Heart left ventricle (tissue), 16 donors: ENCODE measurements at regions of chr17 and their contacts with region 1.

Region 1: DNA sequence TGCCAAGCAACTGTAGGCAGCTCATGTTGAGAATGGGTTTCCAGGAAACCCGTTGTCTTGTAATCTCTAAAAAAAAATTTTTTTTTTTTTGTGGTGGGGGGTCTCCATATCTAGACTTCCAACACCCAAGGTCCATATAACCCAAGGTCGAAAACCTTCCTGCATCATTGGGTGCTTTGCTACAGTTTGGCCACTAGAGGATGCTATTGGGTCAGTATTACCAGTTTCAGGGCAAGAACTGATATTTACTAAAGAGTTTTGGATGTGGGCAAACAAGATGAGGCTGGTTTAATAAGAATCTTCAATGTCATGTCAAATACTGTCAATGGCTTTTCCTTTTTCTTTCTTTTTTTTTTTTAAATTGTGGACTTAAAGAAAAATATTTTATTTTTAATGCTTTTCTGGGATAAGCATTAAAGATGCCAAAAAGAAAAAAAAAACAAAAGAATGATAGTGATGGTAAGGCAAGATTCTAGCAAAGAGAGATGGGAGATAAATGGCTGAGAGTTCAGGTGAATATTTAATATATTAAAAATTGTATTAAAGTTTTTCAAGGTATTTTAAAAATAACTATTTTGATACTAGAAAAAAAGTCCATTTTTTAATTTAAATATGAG is 62.2 kb downstream of the DHRS7C start:
- DNase-seq: no peak
- ATAC-seq: peak in 3 of 4 donors; percentile 54 to 63 (median 61)
- H3K4me3 ChIP-seq: no peak overlapping the region
- H3K27ac ChIP-seq: no peak overlapping the region
- H3K4me1 ChIP-seq: no peaks in the 10 kb centered on the region
- H3K27me3 ChIP-seq: peaks cover 0 to 34% (median 9%) of the 10 kb centered on the region in 9 donors
- CTCF ChIP-seq: peak; percentile 90 to 97 (median 94)
- POLR2A ChIP-seq: no peak

Region 2: GRCh38 chr17:9575381-9576101 is 153.6 kb before region 1 on chr17 and contains the start of gene STX8:
- intact Hi-C with region 1: loop called in 1 of 10 experiments (anchors 10 kb)
- DNase-seq: peak; percentile 92 to 96 (median 94)
- ATAC-seq: peak; percentile 89 to 96 (median 96)
- H3K4me3 ChIP-seq: peak within 1 kb of the TSS; percentile 59 to 99 (median 82)
- H3K27ac ChIP-seq: peak within 1 kb of the TSS in 11 of 12 donors; percentile 41 to 81 (median 63)
- H3K4me1 ChIP-seq: peaks cover 0 to 29% (median 16%) of the 10 kb centered on the region in 12 donors
- H3K27me3 ChIP-seq: no peaks in the 10 kb centered on the region
- CTCF ChIP-seq: no peak
- POLR2A ChIP-seq: peak in 1 of 2 donors; percentile 40
- total RNA-seq, gene STX8: 51.9 to 86.0 (median 62.3) TPM

Region 3: GRCh38 chr17:9612006-9612405 is 117.1 kb before region 1 on chr17:
- intact Hi-C with region 1: no loop called
- DNase-seq: no peak
- ATAC-seq: no peak
- H3K4me3 ChIP-seq: no peak overlapping the region
- H3K27ac ChIP-seq: no peak overlapping the region
- H3K4me1 ChIP-seq: no peaks in the 10 kb centered on the region
- H3K27me3 ChIP-seq: peaks cover 0 to 7% (median 0%) of the 10 kb centered on the region in 9 donors
- CTCF ChIP-seq: no peak
- POLR2A ChIP-seq: no peak

Region 4: DNA sequence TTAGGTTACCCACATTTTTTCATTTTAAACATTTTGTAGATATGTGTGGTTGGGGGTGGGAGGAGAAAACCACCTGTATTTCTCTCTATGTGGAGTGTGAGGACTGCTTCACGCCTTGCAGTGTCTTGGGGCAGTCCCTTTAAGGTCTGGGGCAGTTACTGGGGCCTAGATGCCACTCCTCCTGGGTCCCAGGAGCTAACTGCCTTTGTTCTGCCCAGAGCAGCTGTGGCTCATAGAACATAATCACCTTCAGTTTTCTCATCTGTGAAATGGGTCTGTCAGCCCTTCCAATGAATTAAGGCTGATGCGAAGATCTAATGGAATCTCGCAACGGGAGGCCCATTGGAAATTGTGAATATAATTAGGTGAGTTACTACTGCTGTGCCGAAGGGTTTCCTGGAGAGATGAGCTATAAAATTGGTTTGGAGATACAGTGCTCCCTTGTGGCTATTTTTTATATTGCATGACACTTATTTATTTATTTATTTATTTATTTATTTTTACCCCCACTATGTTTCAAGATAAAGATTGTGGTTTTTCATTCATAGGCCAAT is 39.3 kb after region 1 on chr17:
- intact Hi-C with region 1: loop called in 4 of 10 experiments (anchors 2 to 5 kb)
- DNase-seq: no peak
- ATAC-seq: no peak
- H3K4me3 ChIP-seq: no peak overlapping the region
- H3K27ac ChIP-seq: no peak overlapping the region
- H3K4me1 ChIP-seq: peaks cover 0 to 4% (median 0%) of the 10 kb centered on the region in 12 donors
- H3K27me3 ChIP-seq: peaks cover 0 to 37% (median 3%) of the 10 kb centered on the region in 9 donors
- CTCF ChIP-seq: peak; percentile 45 to 68 (median 63)
- POLR2A ChIP-seq: no peak

Region 5: DNA sequence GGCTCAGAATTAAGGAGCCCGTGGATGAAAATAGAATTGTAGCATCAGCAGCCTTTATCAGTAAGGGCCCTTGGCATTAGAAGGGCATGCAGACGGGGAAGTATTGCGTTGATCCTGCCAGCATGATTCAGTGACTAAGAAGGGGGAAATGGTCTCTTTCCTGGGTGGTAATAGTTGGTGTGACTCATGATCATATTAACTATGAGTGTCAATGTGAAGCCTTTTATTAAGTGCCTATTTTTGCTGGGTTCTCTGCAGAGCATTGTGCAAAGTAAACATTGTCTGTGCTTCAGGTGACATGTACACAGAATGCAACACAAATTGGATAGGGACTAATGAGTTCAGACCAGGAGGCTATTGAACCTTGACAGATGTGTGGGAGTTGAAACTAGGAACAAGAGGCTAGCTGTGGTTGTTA is 151.4 kb after region 1 on chr17:
- intact Hi-C with region 1: loop called in 4 of 10 experiments (anchors 5 to 10 kb)
- DNase-seq: no peak
- ATAC-seq: peak in 2 of 4 donors; percentile 83 to 89
- H3K4me3 ChIP-seq: no peak overlapping the region
- H3K27ac ChIP-seq: no peak overlapping the region
- H3K4me1 ChIP-seq: peaks cover 0 to 5% (median 0%) of the 10 kb centered on the region in 12 donors
- H3K27me3 ChIP-seq: peaks cover 0 to 5% (median 0%) of the 10 kb centered on the region in 9 donors
- CTCF ChIP-seq: no peak
- POLR2A ChIP-seq: no peak

Region 6: GRCh38 chr17:9890124-9890523 is 161.0 kb after region 1 on chr17:
- intact Hi-C with region 1: loop called in 7 of 10 experiments (anchors 5 to 10 kb)
- DNase-seq: peak in 1 of 5 donors; percentile 38
- ATAC-seq: peak in 3 of 4 donors; percentile 39 to 52 (median 50)
- H3K4me3 ChIP-seq: no peak overlapping the region
- H3K27ac ChIP-seq: no peak overlapping the region
- H3K4me1 ChIP-seq: no peaks in the 10 kb centered on the region
- H3K27me3 ChIP-seq: peaks cover 0 to 15% (median 0%) of the 10 kb centered on the region in 9 donors
- CTCF ChIP-seq: peak; percentile 31 to 67 (median 49)
- POLR2A ChIP-seq: no peak

Region 7: GRCh38 chr17:10628756-10629155 is 899.6 kb after region 1 on chr17:
- intact Hi-C with region 1: loop called in 1 of 10 experiments (anchors 10 kb)
- DNase-seq: no peak
- ATAC-seq: no peak
- H3K4me3 ChIP-seq: no peak overlapping the region
- H3K27ac ChIP-seq: no peak overlapping the region
- H3K4me1 ChIP-seq: no peaks in the 10 kb centered on the region
- H3K27me3 ChIP-seq: no peaks in the 10 kb centered on the region
- CTCF ChIP-seq: peak in 7 of 12 donors; percentile 8 to 27 (median 24)
- POLR2A ChIP-seq: no peak